CD4-positive, alpha-beta memory T cell (primary cell): ENCODE measurements at regions of chr1 and their contacts with region 1.

Region 1: DNA sequence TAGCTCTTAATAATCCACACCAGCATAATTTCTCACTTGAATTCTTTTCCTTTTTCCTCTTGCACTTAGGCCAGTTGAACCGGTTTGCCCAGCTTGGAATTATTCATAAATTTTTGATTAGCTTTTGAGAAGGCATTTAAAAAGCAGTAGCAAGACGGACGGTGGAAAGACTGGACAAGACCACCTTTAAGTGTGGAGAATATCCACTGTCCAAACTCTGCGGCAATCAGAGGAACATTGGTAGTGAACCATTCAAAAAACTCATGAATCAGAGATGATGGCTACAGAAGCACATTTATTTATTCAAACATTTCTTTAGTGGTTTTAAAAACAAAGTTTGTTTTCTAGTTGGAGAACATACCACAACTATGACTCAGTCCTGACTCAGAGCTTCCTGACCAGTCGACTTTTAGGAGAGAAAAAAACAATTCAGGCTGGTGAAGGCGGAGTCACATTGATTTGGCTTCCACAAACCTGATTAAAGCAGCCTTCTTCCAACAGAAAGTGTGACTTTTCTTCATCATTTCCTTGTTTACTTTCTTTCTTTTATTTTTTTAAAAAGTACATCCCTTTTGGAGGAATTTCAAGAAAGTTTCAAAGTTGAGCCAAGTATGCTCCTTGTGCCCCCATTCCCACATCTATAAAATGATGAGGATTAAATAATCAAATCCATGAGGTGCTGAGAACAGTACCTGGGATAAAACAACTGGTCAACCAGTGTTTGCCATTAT is 128.8 kb downstream of the ADSS2 start:
- DNase-seq: peak; percentile 37 to 73 (median 53)
- H3K4me3 ChIP-seq: no peak overlapping the region
- H3K4me3 Mint-ChIP-seq: peak overlapping the region in 7 of 8 donors; percentile 61 to 90 (median 83)
- H3K27ac ChIP-seq: peak overlapping the region; percentile 24
- H3K27ac Mint-ChIP-seq: peak overlapping the region; percentile 55 to 95 (median 89)
- H3K4me1 ChIP-seq: peaks cover 60% of the 10 kb centered on the region
- H3K4me1 Mint-ChIP-seq: peaks cover 30 to 70% (median 55%) of the 10 kb centered on the region in 4 donors
- H3K27me3 ChIP-seq: no peaks in the 10 kb centered on the region
- H3K27me3 Mint-ChIP-seq: no peaks in the 10 kb centered on the region

Region 2: DNA sequence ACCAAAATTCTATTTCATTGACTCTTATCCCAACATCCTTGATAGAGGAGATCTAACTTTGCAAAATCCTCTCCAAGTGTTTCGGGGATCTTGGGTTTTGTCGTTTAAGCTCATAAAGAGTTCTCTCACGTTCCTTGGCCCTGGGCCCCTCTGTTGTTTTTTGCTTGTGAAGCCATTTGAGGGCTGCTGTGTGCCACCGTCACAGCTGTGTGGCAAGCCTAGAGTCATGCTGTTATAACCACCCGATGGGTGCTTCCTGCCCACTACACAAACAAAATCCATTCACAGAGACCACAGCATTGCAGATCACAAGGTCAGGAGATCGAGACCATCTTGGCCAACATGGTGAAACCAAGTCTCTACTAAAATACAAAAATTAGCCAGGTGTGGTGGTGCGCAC is 25.3 kb before region 1 on chr1:
- CTCF ChIA-PET with region 1: interaction called, 13 read pairs
- POLR2A ChIA-PET with region 1: interaction called, 11 read pairs
- intact Hi-C with region 1: no loop called
- DNase-seq: no peak
- H3K4me3 ChIP-seq: no peak overlapping the region
- H3K4me3 Mint-ChIP-seq: peak overlapping the region in 2 of 8 donors; percentile 6 to 42
- H3K27ac ChIP-seq: no peak overlapping the region
- H3K27ac Mint-ChIP-seq: peak overlapping the region in 1 of 7 donors; percentile 57
- H3K4me1 ChIP-seq: peaks cover 10% of the 10 kb centered on the region
- H3K4me1 Mint-ChIP-seq: peaks cover 6 to 10% (median 7%) of the 10 kb centered on the region in 4 donors
- H3K27me3 ChIP-seq: no peaks in the 10 kb centered on the region
- H3K27me3 Mint-ChIP-seq: no peaks in the 10 kb centered on the region

Region 3: GRCh38 chr1:244302889-244303613 is 19.9 kb before region 1 on chr1:
- CTCF ChIA-PET with region 1: interaction called, 13 read pairs
- POLR2A ChIA-PET with region 1: interaction called, 11 read pairs
- intact Hi-C with region 1: no loop called
- DNase-seq: no peak
- H3K4me3 ChIP-seq: no peak overlapping the region
- H3K4me3 Mint-ChIP-seq: no peak overlapping the region
- H3K27ac ChIP-seq: no peak overlapping the region
- H3K27ac Mint-ChIP-seq: no peak overlapping the region
- H3K4me1 ChIP-seq: peaks cover 10% of the 10 kb centered on the region
- H3K4me1 Mint-ChIP-seq: peaks cover 6 to 14% (median 8%) of the 10 kb centered on the region in 4 donors
- H3K27me3 ChIP-seq: no peaks in the 10 kb centered on the region
- H3K27me3 Mint-ChIP-seq: no peaks in the 10 kb centered on the region

Region 4: GRCh38 chr1:244335456-244335855 is 12.5 kb after region 1 on chr1:
- CTCF ChIA-PET with region 1: no interaction called
- POLR2A ChIA-PET with region 1: no interaction called
- intact Hi-C with region 1: no loop called
- DNase-seq: no peak
- H3K4me3 ChIP-seq: no peak overlapping the region
- H3K4me3 Mint-ChIP-seq: no peak overlapping the region
- H3K27ac ChIP-seq: no peak overlapping the region
- H3K27ac Mint-ChIP-seq: no peak overlapping the region
- H3K4me1 ChIP-seq: no peaks in the 10 kb centered on the region
- H3K4me1 Mint-ChIP-seq: peaks cover 0 to 2% (median under 1%) of the 10 kb centered on the region in 4 donors
- H3K27me3 ChIP-seq: no peaks in the 10 kb centered on the region
- H3K27me3 Mint-ChIP-seq: peaks cover 5 to 11% of the 10 kb centered on the region in 2 donors

Region 5: GRCh38 chr1:244361764-244362473 is 39.0 kb after region 1 on chr1:
- CTCF ChIA-PET with region 1: no interaction called
- POLR2A ChIA-PET with region 1: no interaction called
- intact Hi-C with region 1: loop called (anchors 1 kb)
- DNase-seq: no peak
- H3K4me3 ChIP-seq: no peak overlapping the region
- H3K4me3 Mint-ChIP-seq: no peak overlapping the region
- H3K27ac ChIP-seq: no peak overlapping the region
- H3K27ac Mint-ChIP-seq: no peak overlapping the region
- H3K4me1 ChIP-seq: no peaks in the 10 kb centered on the region
- H3K4me1 Mint-ChIP-seq: no peaks in the 10 kb centered on the region
- H3K27me3 ChIP-seq: no peaks in the 10 kb centered on the region
- H3K27me3 Mint-ChIP-seq: no peaks in the 10 kb centered on the region

Region 6: GRCh38 chr1:244451951-244452795 is 129.2 kb after region 1 on chr1:
- CTCF ChIA-PET with region 1: no interaction called
- POLR2A ChIA-PET with region 1: interaction called, 8 read pairs
- intact Hi-C with region 1: loop called (anchors 1 kb)
- DNase-seq: peak; percentile 98 to 99 (median 99)
- H3K4me3 ChIP-seq: peak overlapping the region in 1 of 2 donors; percentile 95
- H3K4me3 Mint-ChIP-seq: peak overlapping the region; percentile 87 to 97 (median 92)
- H3K27ac ChIP-seq: peak overlapping the region; percentile 94
- H3K27ac Mint-ChIP-seq: peak overlapping the region; percentile 87 to 100 (median 95)
- H3K4me1 ChIP-seq: peaks cover 39% of the 10 kb centered on the region
- H3K4me1 Mint-ChIP-seq: peaks cover 31 to 48% (median 35%) of the 10 kb centered on the region in 4 donors
- H3K27me3 ChIP-seq: no peaks in the 10 kb centered on the region
- H3K27me3 Mint-ChIP-seq: no peaks in the 10 kb centered on the region